Natural killer cell (primary cell): ENCODE measurements at regions of chr14 and their contacts with region 1.

Region 1: DNA sequence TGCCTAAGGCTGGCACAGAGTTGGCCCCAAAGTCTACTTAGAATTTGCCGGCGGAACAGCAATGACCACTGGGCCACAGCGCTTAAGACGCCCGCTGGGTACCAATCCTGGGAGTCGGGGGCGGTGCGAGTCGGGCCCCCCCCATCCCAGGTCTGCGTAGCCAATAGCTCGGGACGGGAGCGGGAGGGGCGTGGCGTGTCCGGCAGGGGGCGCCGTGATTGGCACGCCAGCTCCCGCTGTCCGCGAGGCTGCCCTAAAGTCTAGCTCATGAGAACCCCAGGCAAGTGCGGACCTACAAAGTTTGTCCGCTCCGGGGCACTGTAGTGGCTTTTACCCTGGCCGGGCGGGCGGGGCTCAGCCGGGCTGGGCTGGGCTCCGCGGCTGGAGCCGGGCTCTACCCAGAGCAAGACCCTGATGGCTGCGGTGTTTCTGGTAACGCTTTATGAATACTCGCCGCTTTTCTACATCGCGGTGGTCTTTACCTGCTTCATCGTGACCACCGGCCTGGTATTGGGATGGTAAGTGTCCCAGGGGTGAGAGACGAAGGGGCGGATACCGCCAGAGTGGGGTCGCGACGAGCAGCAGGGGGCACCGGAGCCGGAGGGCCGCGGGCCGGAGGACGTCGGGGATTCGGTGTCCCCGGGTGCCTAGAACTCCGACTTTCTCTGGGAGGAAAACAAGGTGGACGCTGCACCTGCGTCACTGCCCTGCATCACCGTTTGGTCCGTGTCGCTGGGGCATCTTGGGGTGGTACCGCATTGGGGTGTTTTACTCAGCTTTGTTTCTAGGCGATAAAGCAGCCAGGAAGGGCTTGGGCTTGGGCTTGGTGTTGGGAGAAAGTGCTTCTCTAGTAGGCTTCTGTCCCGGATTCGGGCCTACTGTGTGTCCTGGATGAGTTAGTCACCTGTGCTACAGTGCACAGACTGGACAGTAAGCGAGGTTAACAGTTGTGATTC is at the start of gene CGRRF1:
- DNase-seq: peak; percentile 96
- ATAC-seq: peak; percentile 95 to 98 (median 96)
- H3K4me3 ChIP-seq: peak within 1 kb of the TSS; percentile 91
- H3K4me3 Mint-ChIP-seq: peak within 1 kb of the TSS; percentile 95
- H3K27ac ChIP-seq: peak within 1 kb of the TSS; percentile 80
- H3K27ac Mint-ChIP-seq: peak within 1 kb of the TSS; percentile 84 to 97
- H3K4me1 ChIP-seq: peaks cover 11% of the 10 kb centered on the region
- H3K4me1 Mint-ChIP-seq: peaks cover 44 to 55% of the 10 kb centered on the region in 2 donors
- H3K27me3 ChIP-seq: no peaks in the 10 kb centered on the region
- H3K27me3 Mint-ChIP-seq: peaks cover 0 to 5% of the 10 kb centered on the region in 2 donors
- CTCF ChIP-seq: peak; percentile 50
- total RNA-seq, gene CGRRF1: 25.4 to 30.1 (median 26.7) TPM

Region 2: GRCh38 chr14:54396493-54397335 is 113.1 kb before region 1 on chr14 and contains the start of gene CDKN3:
- intact Hi-C with region 1: loop called (anchors 1 kb)
- DNase-seq: peak; percentile 97
- ATAC-seq: peak; percentile 93 to 98 (median 94)
- H3K4me3 ChIP-seq: peak within 1 kb of the TSS; percentile 81
- H3K4me3 Mint-ChIP-seq: peak within 1 kb of the TSS; percentile 92
- H3K27ac ChIP-seq: no peak within 1 kb of the TSS
- H3K27ac Mint-ChIP-seq: peak within 1 kb of the TSS; percentile 58 to 86
- H3K4me1 ChIP-seq: peaks cover 12% of the 10 kb centered on the region
- H3K4me1 Mint-ChIP-seq: peaks cover 7% of the 10 kb centered on the region in 2 donors
- H3K27me3 ChIP-seq: no peaks in the 10 kb centered on the region
- H3K27me3 Mint-ChIP-seq: peaks cover 0 to 3% of the 10 kb centered on the region in 2 donors
- CTCF ChIP-seq: peak; percentile 30
- total RNA-seq, gene CDKN3: 0.89 to 3.0 (median 1.8) TPM

Region 3: GRCh38 chr14:54440873-54441868 is 68.7 kb before region 1 on chr14 and contains the start of gene CNIH1:
- intact Hi-C with region 1: loop called (anchors 1 kb)
- DNase-seq: peak; percentile 95 to 97
- ATAC-seq: peak; percentile 91 to 96 (median 95)
- H3K4me3 ChIP-seq: peak within 1 kb of the TSS; percentile 63
- H3K4me3 Mint-ChIP-seq: peak within 1 kb of the TSS; percentile 96
- H3K27ac ChIP-seq: peak within 1 kb of the TSS; percentile 80
- H3K27ac Mint-ChIP-seq: peak within 1 kb of the TSS; percentile 92
- H3K4me1 ChIP-seq: peaks cover 7% of the 10 kb centered on the region
- H3K4me1 Mint-ChIP-seq: peaks cover 26 to 33% of the 10 kb centered on the region in 2 donors
- H3K27me3 ChIP-seq: no peaks in the 10 kb centered on the region
- H3K27me3 Mint-ChIP-seq: peaks cover 5 to 17% of the 10 kb centered on the region in 2 donors
- CTCF ChIP-seq: peak; percentile 91
- total RNA-seq, gene CNIH1: 20.4 to 30.9 (median 25.7) TPM

Region 4: GRCh38 chr14:54488646-54489317 is 21.0 kb before region 1 on chr14 and contains the start of gene GMFB:
- intact Hi-C with region 1: loop called (anchors 1 kb)
- DNase-seq: peak; percentile 86 to 93
- ATAC-seq: peak; percentile 95 to 98 (median 97)
- H3K4me3 ChIP-seq: peak within 1 kb of the TSS; percentile 88
- H3K4me3 Mint-ChIP-seq: peak within 1 kb of the TSS; percentile 94
- H3K27ac ChIP-seq: peak within 1 kb of the TSS; percentile 88
- H3K27ac Mint-ChIP-seq: peak within 1 kb of the TSS; percentile 82 to 86
- H3K4me1 ChIP-seq: peaks cover 24% of the 10 kb centered on the region
- H3K4me1 Mint-ChIP-seq: peaks cover 50 to 57% of the 10 kb centered on the region in 2 donors
- H3K27me3 ChIP-seq: no peaks in the 10 kb centered on the region
- H3K27me3 Mint-ChIP-seq: no peaks in the 10 kb centered on the region
- CTCF ChIP-seq: no peak
- total RNA-seq, gene GMFB: 46.4 to 55.1 (median 52.8) TPM

Region 5: GRCh38 chr14:54902521-54903420 is 392.9 kb after region 1 on chr14 and contains the start of gene GCH1:
- intact Hi-C with region 1: loop called (anchors 5 kb)
- DNase-seq: peak; percentile 77 to 89
- ATAC-seq: peak; percentile 69 to 83 (median 79)
- H3K4me3 ChIP-seq: peak within 1 kb of the TSS; percentile 80
- H3K4me3 Mint-ChIP-seq: peak within 1 kb of the TSS; percentile 87
- H3K27ac ChIP-seq: peak within 1 kb of the TSS; percentile 92
- H3K27ac Mint-ChIP-seq: peak within 1 kb of the TSS; percentile 87 to 90
- H3K4me1 ChIP-seq: peaks cover 18% of the 10 kb centered on the region
- H3K4me1 Mint-ChIP-seq: peaks cover 24 to 39% of the 10 kb centered on the region in 2 donors
- H3K27me3 ChIP-seq: no peaks in the 10 kb centered on the region
- H3K27me3 Mint-ChIP-seq: no peaks in the 10 kb centered on the region
- CTCF ChIP-seq: peak; percentile 64
- total RNA-seq, gene GCH1: 51.7 to 71.5 (median 52.6) TPM